Endothelial cell of umbilical vein (primary cell): ENCODE measurements at regions of chr19 and their contacts with region 1.

Region 1: DNA sequence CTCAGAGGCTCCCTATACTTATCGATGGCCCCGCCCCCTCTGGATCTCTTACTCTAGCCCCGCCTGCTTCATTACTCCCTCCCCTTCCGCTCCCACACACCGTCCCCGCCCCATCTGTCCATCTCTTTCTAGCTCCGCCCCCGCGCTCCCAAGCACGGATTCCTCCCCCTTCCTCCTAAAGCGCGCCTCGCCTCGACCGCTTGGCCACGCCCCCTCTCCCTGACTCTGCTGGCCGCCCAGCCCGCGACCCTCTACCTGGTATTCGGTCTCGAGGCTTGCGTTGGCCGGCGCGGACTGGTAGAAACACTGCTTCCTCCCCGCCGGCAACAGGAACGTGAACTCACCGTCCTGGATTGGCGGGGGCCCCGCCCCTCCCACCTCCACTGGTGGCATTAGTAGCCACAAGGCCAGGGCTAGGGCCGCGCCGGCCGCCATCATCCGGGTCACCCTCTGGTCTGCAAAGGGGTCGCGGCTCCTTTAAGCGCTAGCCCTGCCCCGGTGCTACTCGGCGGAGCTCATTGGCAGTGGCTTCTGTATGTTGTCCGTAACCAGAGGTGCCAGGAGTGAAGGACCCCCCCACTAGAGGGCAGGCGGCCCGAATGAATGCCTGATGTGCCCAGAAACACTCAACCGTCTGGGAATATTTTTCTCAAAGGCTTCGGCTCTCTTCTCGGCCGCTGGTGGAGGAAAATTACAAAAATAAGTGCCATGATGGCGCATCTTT is at the start of gene TMED1:
- DNase-seq: peak; percentile 99
- H3K4me3 ChIP-seq: peak within 1 kb of the TSS; percentile 17 to 71 (median 48)
- H3K27ac ChIP-seq: peak within 1 kb of the TSS; percentile 97
- H3K4me1 ChIP-seq: peaks cover 9% of the 10 kb centered on the region
- H3K27me3 ChIP-seq: no peaks in the 10 kb centered on the region
- CTCF ChIP-seq: peak in 1 of 2 donors; percentile 8
- POLR2A ChIP-seq: no peak
- total RNA-seq, gene TMED1: 31.2 and 33.9 TPM in 2 replicates

Region 2: GRCh38 chr19:10353793-10354391 is 482.0 kb before region 1 on chr19:
- CTCF ChIA-PET with region 1: no interaction called
- POLR2A ChIA-PET with region 1: no interaction called
- dilution Hi-C with region 1: no loop called
- intact Hi-C with region 1: no loop called
- DNase-seq: peak; percentile 33
- H3K4me3 ChIP-seq: no peak overlapping the region
- H3K27ac ChIP-seq: no peak overlapping the region
- H3K4me1 ChIP-seq: no peaks in the 10 kb centered on the region
- H3K27me3 ChIP-seq: no peaks in the 10 kb centered on the region
- CTCF ChIP-seq: no peak
- POLR2A ChIP-seq: no peak

Region 3: DNA sequence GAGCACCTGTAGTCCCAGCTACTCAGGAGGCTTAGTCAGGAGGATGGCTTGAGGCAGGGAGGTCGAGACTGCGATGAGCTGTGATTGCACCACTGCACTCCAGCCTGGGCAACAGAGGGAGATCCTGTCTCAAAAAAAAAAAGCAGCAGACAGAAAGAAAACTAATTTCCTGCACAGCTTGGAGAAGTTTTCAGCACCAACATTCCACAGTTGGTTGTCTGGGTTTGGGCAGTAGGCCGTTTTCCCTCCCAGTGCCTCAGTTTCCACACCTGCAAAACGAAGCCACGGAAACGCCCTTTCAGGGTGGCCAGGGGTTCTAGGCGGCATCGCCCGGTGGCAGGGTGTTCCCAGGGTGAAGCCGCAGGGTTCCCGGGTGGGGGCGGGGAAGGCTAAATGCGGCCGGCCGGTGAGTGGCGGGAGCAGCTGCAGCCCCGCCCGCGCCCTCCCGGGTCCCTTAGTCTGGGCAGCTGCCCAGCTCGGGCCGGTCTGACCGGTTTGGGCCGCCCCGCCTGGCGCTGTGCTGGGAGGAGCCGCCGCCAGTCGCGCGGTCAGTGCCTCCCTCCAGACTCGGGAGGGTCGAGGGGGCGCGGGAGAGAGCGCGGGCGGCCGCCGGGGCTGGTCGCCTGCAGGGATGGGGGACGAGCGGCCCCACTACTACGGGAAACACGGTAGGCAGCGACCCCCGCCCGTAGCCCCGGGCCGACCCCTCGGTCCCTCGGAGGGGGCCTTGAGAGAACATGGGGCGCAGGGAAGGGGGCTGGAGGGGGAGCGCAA is 210.7 kb before region 1 on chr19 and contains the start of gene SLC44A2:
- CTCF ChIA-PET with region 1: no interaction called
- POLR2A ChIA-PET with region 1: no interaction called
- dilution Hi-C with region 1: no loop called
- intact Hi-C with region 1: no loop called
- DNase-seq: peak; percentile 41
- H3K4me3 ChIP-seq: peak within 1 kb of the TSS; percentile 33 to 37 (median 33)
- H3K27ac ChIP-seq: no peak within 1 kb of the TSS
- H3K4me1 ChIP-seq: peaks cover 10% of the 10 kb centered on the region
- H3K27me3 ChIP-seq: no peaks in the 10 kb centered on the region
- CTCF ChIP-seq: no peak
- POLR2A ChIP-seq: peak; percentile 22
- total RNA-seq, gene SLC44A2: 130 and 136 TPM in 2 replicates

Region 4: GRCh38 chr19:10780368-10780767 is 55.5 kb before region 1 on chr19:
- CTCF ChIA-PET with region 1: no interaction called
- POLR2A ChIA-PET with region 1: no interaction called
- dilution Hi-C with region 1: no loop called
- intact Hi-C with region 1: loop called (anchors 2 kb)
- DNase-seq: peak; percentile 90
- H3K4me3 ChIP-seq: no peak overlapping the region
- H3K27ac ChIP-seq: peak overlapping the region; percentile 96
- H3K4me1 ChIP-seq: peaks cover 19% of the 10 kb centered on the region
- H3K27me3 ChIP-seq: no peaks in the 10 kb centered on the region
- CTCF ChIP-seq: no peak
- POLR2A ChIP-seq: no peak

Region 5: GRCh38 chr19:10812902-10813404 is 23.0 kb before region 1 on chr19:
- CTCF ChIA-PET with region 1: no interaction called
- POLR2A ChIA-PET with region 1: no interaction called
- dilution Hi-C with region 1: no loop called
- intact Hi-C with region 1: loop called (anchors 1 kb)
- DNase-seq: peak; percentile 80
- H3K4me3 ChIP-seq: no peak overlapping the region
- H3K27ac ChIP-seq: peak overlapping the region; percentile 72
- H3K4me1 ChIP-seq: peaks cover 8% of the 10 kb centered on the region
- H3K27me3 ChIP-seq: no peaks in the 10 kb centered on the region
- CTCF ChIP-seq: no peak
- POLR2A ChIP-seq: peak; percentile 21

Region 6: GRCh38 chr19:10820173-10820572 is 15.7 kb before region 1 on chr19:
- CTCF ChIA-PET with region 1: interaction called, 12 read pairs
- POLR2A ChIA-PET with region 1: no interaction called
- dilution Hi-C with region 1: no loop called
- intact Hi-C with region 1: no loop called
- DNase-seq: no peak
- H3K4me3 ChIP-seq: no peak overlapping the region
- H3K27ac ChIP-seq: no peak overlapping the region
- H3K4me1 ChIP-seq: no peaks in the 10 kb centered on the region
- H3K27me3 ChIP-seq: no peaks in the 10 kb centered on the region
- CTCF ChIP-seq: peak; percentile 25 to 31
- POLR2A ChIP-seq: no peak

Region 7: DNA sequence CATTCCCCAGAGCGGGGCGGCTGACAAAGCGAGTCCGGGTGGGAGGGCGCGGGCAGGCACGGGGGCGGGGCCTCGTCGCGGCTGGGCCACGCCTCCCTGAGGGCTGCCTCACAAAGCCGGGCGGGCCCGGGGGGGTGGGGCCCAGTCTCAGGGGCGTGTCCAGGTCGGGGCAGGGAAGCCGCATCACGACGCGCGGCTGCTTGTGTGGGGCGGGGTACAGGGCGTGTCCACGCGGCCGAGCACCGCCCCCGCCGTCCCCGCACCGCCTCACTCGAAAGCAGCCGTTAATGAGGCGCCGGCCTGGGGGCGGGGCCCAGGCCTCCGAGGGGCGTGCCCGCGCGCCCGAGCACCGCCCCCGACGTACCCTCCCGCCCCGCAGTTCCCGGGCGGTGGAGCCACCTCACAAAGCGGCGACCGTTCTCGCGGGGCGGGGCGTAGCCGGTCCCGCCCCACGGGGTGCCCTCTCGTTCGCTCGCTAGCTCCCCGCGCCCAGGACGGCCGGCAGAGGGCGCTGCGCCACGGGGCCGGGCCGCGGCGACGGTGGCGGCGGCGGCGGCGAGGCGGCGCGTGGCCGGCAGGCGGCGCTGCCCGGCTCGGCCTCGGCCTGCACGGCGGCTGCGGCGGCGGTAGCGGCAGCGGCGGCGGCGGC is 35.2 kb after region 1 on chr19 and contains the start of gene CARM1:
- CTCF ChIA-PET with region 1: interaction called, 41 read pairs
- POLR2A ChIA-PET with region 1: no interaction called
- dilution Hi-C with region 1: no loop called
- intact Hi-C with region 1: loop called (anchors 1 kb)
- DNase-seq: peak; percentile 99
- H3K4me3 ChIP-seq: peak within 1 kb of the TSS; percentile 81 to 100 (median 99)
- H3K27ac ChIP-seq: peak within 1 kb of the TSS; percentile 52
- H3K4me1 ChIP-seq: peaks cover 12% of the 10 kb centered on the region
- H3K27me3 ChIP-seq: no peaks in the 10 kb centered on the region
- CTCF ChIP-seq: peak; percentile 65 to 66
- POLR2A ChIP-seq: no peak
- total RNA-seq, gene CARM1: 70.8 and 72.2 TPM in 2 replicates